ENCODE measurements at regions of chr10 and their contacts with region 1.

Region 1: GRCh38 chr10:95841661-95842498 is 65.9 kb upstream of the CC2D2B start:
- DNase-seq: peak; percentile 83
- H3K4me3 ChIP-seq: peak overlapping the region; percentile 13
- H3K27ac ChIP-seq: peak overlapping the region; percentile 13
- H3K4me1 ChIP-seq: peaks cover 45% of the 10 kb centered on the region
- CTCF ChIP-seq: peak; percentile 100

Region 2: GRCh38 chr10:95693668-95694534 is 148.0 kb before region 1 on chr10 and contains the start of gene TCTN3:
- CTCF ChIA-PET with region 1: interaction called, 88 read pairs
- POLR2A ChIA-PET with region 1: interaction called, 34 read pairs
- intact Hi-C with region 1: loop called (anchors 1 kb)
- DNase-seq: peak; percentile 100
- H3K4me3 ChIP-seq: peak within 1 kb of the TSS; percentile 83
- H3K27ac ChIP-seq: no peak within 1 kb of the TSS
- H3K4me1 ChIP-seq: peaks cover 22% of the 10 kb centered on the region
- CTCF ChIP-seq: peak; percentile 98
- total RNA-seq, gene TCTN3: 9.6 and 10.4 TPM in 2 replicates

Measured in OCI-LY7 (cell line).